ENCODE measurements at regions of chr10 and their contacts with region 1.

Region 1: DNA sequence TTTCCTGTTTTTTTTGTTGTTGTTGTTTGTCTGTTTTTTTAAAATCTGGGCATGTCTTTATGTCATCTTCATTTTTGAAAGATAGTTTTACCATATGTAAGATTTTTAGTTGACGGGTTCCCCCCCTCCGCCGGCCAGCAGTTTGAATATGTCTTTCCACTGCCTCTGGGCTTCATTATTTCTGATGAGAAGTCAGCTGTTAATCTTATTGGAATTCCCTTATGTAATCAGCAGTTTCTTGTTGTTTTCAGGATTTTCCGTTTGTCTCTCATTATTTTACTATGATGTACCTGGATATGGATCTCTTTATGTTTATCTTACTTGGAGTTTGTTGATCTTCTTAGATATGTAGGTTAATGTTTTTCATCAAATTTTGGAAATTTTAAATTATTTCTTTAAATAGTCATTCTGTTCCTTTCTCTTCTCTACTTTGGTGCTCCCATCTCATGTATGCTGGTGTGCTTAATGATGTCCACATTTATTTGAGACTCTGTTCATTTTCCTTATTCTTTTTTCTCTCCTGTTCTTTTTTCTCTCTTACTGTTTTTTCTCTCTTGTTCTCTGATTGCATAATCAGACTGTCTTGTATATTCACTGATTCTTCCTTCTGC is 9.7 kb downstream of the EXOC6 start:
- DNase-seq: peak in 1 of 3 donors; percentile 47
- H3K4me3 ChIP-seq: no peak overlapping the region
- H3K27ac ChIP-seq: no peak overlapping the region
- H3K4me1 ChIP-seq: no peaks in the 10 kb centered on the region
- H3K27me3 ChIP-seq: no peaks in the 10 kb centered on the region

Region 2: GRCh38 chr10:92873029-92873428 is 15.0 kb after region 1 on chr10:
- CTCF ChIA-PET with region 1: interaction called, 10 read pairs
- POLR2A ChIA-PET with region 1: no interaction called
- DNase-seq: peak in 2 of 3 donors; percentile 7 to 30
- H3K4me3 ChIP-seq: no peak overlapping the region
- H3K27ac ChIP-seq: no peak overlapping the region
- H3K4me1 ChIP-seq: peaks cover 17 to 28% (median 23%) of the 10 kb centered on the region in 4 experiments
- H3K27me3 ChIP-seq: no peaks in the 10 kb centered on the region

Measured in common myeloid progenitor, CD34-positive (primary cell).